ENCODE measurements at regions of chr2 and their contacts with region 1.

Region 1: DNA sequence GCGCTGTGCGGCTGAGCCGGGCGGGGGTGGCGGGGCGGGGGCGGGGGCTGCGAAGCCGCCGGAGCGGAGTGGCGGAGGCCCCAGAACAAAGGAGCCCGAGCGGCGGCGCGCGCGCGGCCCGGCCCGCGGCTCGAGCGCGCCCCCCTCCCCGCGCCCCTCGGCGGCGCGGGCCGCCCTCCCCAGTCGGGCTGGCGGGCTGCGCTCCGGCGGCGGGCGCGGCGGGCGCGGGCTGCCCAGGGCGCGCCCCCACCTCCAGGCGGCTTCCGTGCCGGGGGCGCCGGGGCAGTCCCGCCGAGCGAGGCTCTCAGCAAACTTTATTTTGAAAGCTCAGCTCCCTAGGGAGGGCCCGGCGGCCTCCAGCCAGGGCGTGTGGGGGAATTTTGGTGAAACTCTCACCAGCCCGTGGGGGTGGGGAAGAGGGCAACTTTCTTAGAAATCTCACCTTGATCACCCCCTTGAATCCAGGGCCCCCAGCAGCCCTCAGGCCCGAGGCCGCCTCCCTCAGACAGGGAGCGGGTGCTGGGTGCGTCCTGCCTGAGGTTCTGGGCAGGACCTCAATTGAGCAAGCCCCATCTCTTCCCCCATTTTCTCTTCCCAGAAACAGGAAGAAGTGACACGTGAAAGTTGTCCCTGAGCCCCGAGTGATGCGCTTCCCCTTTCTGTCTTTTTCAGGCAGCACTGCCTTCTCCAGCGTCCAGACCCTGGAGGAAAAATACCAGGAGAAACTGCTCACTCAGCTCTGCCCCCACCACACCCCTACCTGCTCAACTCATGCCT is 786 bp downstream of the TET3 start:
- DNase-seq: peak; percentile 69
- H3K4me3 ChIP-seq: peak overlapping the region; percentile 67
- H3K27ac ChIP-seq: peak overlapping the region; percentile 49
- H3K4me1 ChIP-seq: peaks cover 64% of the 10 kb centered on the region
- CTCF ChIP-seq: no peak

Region 2: GRCh38 chr2:73818296-73818695 is 167.2 kb before region 1 on chr2:
- CTCF ChIA-PET with region 1: no interaction called
- POLR2A ChIA-PET with region 1: no interaction called
- intact Hi-C with region 1: no loop called
- DNase-seq: no peak
- H3K4me3 ChIP-seq: no peak overlapping the region
- H3K27ac ChIP-seq: no peak overlapping the region
- H3K4me1 ChIP-seq: peaks cover 16% of the 10 kb centered on the region
- CTCF ChIP-seq: no peak

Region 3: DNA sequence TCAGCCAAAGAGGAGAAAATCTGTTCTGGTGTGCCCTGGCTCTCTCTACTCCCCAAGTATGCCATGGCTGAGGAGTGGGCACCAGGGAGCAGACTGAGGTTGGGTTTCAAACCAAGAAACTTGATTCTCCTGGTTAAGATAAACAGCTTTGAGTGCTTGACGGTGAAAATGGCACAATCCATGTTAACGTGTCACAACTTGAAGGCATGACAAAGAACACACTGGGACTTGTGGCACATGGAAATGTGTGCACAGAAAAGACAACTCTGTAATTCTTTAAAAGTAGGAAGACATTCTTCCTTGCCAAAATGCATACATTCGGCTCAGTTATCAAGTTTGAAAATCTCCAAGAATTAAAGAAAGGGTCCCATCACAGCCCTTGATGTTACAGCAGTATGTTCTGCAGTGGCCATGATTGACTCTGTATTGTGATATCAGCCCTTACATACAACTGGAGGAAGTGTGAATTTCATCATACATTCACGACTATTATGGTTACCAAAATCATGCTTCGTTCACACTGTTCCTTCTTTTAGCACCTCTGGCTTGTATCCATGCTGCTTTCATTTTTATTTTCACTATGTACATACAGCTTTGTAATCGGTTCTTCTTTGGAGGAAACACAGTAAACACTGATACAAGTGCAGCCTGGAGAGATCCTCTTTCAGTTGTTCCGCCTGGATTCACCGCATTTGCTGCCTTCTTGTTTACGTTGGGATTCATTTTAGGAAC is 108.3 kb before region 1 on chr2:
- CTCF ChIA-PET with region 1: no interaction called
- POLR2A ChIA-PET with region 1: no interaction called
- intact Hi-C with region 1: no loop called
- DNase-seq: no peak
- H3K4me3 ChIP-seq: no peak overlapping the region
- H3K27ac ChIP-seq: no peak overlapping the region
- H3K4me1 ChIP-seq: no peaks in the 10 kb centered on the region
- CTCF ChIP-seq: no peak

Region 4: DNA sequence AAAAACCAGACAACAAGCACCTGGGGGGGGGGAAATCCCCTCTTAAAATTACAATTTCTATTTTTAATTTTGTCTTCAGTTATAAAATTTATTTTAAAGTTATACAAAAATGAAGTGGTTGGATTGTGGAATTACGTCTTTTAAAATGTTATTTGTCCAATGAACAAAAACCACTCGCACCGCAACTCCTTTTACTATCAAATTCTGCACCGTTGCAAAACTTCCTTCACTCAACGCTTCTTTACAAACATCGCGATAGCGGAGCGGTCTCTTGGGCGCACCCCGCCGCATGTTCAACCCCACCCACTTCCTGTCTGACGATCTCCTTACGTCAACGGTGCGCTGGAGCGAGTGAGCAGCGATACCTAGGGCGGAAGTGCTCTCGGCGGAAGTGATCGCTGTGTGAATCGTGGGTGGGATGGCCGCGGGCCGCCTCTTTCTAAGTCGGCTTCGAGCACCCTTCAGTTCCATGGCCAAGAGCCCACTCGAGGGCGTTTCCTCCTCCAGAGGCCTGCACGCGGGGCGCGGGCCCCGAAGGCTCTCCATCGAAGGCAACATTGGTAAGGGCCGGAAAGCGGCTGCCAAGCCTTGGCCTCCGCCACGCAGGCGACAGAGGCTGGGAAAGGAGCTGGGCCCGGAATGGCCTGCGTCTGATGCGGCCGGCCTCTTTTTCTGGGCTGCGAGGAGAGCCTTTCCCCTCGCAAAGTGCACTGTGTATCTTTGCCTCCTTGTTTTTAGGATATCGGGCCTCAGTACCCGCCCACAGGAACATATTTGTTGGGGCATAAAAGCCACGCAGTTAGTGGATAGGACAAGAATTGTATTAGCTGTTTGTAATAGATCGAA is 58.8 kb before region 1 on chr2 and contains the start of gene DGUOK:
- CTCF ChIA-PET with region 1: no interaction called
- POLR2A ChIA-PET with region 1: interaction called, 5 read pairs
- intact Hi-C with region 1: loop called (anchors 5 kb)
- DNase-seq: peak; percentile 100
- H3K4me3 ChIP-seq: peak within 1 kb of the TSS; percentile 83
- H3K27ac ChIP-seq: peak within 1 kb of the TSS; percentile 60
- H3K4me1 ChIP-seq: peaks cover 40% of the 10 kb centered on the region
- CTCF ChIP-seq: no peak
- total RNA-seq, gene DGUOK: 57.1 and 73.4 TPM in 2 replicates

Region 5: DNA sequence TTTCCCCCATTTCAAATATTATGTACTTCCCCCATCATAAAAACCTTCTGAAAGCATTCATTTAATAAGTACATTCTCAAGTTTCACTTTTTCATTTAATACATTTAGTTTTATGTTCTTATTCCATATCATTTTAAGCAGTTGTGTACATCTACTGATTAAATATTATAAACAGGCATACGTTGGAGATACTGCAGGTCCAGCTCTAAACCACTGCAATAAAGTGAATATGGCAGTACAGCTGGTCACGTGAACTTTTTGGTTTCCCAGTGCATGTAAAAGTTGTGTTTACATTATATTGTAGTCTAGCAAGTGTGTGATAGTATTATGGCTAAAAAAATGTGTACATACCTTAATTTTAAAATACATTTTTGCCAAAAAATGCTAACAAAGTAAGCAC is 47.9 kb after region 1 on chr2:
- CTCF ChIA-PET with region 1: no interaction called
- POLR2A ChIA-PET with region 1: no interaction called
- intact Hi-C with region 1: loop called (anchors 2 kb)
- DNase-seq: no peak
- H3K4me3 ChIP-seq: peak overlapping the region; percentile 48
- H3K27ac ChIP-seq: peak overlapping the region; percentile 53
- H3K4me1 ChIP-seq: peaks cover 50% of the 10 kb centered on the region
- CTCF ChIP-seq: no peak

Region 6: GRCh38 chr2:74080346-74080745 is 94.8 kb after region 1 on chr2:
- CTCF ChIA-PET with region 1: no interaction called
- POLR2A ChIA-PET with region 1: no interaction called
- intact Hi-C with region 1: no loop called
- DNase-seq: peak; percentile 3
- H3K4me3 ChIP-seq: no peak overlapping the region
- H3K27ac ChIP-seq: no peak overlapping the region
- H3K4me1 ChIP-seq: peaks cover 11% of the 10 kb centered on the region
- CTCF ChIP-seq: 0 out of 2 replicates have a peak, but pooled peaks have one; percentile 31

Measured in OCI-LY7 (cell line).